Activated CD4-positive, alpha-beta T cell treated with anti-CD3 and anti-CD28 coated beads, Interleukin-2, amount 10 ng/mL, durations not matched to agents 7 days and 5 days (primary cell): ENCODE measurements at regions of chr6 and their contacts with region 1.

Region 1: DNA sequence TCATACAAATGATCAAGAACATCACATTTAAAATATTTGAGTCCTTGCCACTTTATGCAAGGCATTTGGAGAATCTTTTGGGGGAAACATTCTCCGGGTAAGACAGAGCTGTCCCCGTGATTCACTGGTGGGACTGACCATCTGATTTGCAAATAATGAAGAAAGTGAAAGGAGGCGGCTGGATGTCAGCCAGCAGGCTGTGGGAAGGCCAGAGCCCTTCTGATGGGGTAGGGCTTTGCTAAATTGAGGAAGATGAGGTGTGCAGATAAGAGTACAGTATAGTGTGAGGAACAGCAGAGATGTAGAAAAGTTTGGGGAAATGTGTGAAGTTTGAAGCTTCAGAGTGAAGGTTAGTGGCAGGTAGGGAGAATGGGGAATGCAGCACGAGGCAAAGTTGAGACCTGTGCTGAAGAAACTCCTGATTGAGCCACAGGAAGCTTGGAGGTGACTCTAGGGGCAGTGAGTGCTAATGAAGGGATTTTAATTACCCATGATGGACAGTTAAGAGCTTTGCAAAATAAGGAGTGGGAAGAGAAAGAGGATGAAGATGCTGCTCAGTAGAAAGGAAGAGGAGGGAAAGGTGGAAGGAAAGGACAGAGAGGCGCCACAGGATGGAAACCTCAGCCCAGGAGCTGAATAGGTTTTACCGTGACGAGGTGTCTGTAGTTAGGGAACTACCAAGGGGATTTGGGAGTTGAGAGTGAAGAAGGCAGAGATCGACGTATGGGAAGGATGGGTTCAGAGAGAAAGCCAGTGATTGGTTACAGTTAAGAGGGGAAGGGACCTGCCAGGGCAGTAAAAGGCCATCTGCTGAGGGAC is 68.7 kb downstream of the SNX9 start:
- DNase-seq: no peak
- H3K4me3 Mint-ChIP-seq: peak overlapping the region; percentile 18
- H3K27ac Mint-ChIP-seq: peak overlapping the region; percentile 52
- H3K4me1 Mint-ChIP-seq: peaks cover 30% of the 10 kb centered on the region
- H3K27me3 Mint-ChIP-seq: no peaks in the 10 kb centered on the region

Region 2: DNA sequence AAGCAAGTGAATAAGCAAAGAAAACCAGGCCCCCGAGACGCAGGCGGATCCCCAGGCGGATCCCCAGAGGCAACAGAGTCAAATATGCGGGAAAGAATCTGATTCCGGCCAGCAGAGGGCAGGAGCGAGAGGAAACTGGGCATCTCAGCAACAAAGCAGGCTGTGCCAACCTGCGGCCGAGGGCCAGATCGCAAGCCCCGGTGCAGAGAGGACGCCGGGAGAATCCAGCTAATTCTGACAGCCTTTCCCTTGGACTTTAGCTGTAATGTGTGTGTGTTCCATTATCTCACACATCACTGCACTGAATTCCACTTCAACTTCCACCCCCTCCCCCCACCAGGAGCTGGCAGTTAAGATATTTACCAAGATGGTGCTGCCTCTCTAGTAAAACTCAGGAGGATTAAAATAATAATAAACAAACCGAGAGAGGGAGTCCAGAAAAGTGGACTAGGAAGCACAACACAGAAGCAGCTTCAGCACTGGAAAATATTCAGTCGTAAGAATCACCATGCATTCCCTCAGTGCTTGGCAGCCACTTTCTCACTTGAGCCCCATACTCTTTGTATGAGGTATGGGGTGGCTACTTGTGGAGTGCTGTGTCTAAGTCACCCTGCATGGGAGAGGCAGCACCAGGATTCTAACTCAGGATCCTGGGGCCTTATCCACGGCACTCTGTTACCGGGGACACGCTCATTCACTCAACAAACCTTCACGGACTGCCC is 134.9 kb before region 1 on chr6:
- CTCF ChIA-PET with region 1: interaction called, 10 read pairs
- POLR2A ChIA-PET with region 1: interaction called, 5 read pairs
- DNase-seq: peak; percentile 82
- H3K4me3 Mint-ChIP-seq: no peak overlapping the region
- H3K27ac Mint-ChIP-seq: no peak overlapping the region
- H3K4me1 Mint-ChIP-seq: peaks cover 53% of the 10 kb centered on the region
- H3K27me3 Mint-ChIP-seq: peaks cover 39% of the 10 kb centered on the region

Region 3: GRCh38 chr6:157873735-157874344 is 17.9 kb before region 1 on chr6:
- CTCF ChIA-PET with region 1: interaction called, 10 read pairs
- POLR2A ChIA-PET with region 1: no interaction called
- DNase-seq: peak; percentile 87
- H3K4me3 Mint-ChIP-seq: no peak overlapping the region
- H3K27ac Mint-ChIP-seq: no peak overlapping the region
- H3K4me1 Mint-ChIP-seq: peaks cover 23% of the 10 kb centered on the region
- H3K27me3 Mint-ChIP-seq: no peaks in the 10 kb centered on the region

Region 4: DNA sequence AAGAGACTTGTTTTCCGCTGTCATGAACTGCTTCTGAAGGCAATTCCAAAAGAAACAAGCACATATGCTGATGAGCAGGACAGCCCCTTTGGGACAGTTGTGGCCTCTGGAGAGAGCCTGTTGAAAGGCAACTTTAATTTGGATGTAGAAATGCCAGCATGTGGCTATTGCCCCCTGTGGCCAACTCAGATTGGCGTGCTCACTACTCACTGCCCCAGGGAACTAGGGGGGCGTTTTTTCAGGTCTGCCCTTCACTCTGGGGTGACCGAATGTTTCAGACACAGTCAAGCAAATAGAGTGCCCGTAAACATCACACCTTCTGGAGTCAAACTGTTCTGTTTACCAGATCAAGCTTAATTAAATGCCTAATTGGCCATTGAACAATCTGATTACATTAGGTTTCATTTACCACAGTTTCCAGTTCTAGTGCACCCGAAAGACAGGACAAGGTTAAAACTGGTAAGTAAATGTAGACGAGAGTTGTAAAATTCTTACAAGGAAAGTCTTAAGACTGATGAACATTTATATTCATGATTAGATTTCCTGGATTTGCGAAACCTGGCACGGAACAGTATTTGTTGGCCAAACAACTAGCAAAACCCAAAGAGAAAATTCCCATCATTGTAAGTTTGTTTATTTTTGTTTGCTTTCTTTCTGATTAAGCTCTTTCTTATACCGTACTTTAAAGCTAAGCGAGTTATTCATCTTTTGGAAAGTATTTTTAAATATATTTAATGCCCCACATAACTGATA is 14.0 kb after region 1 on chr6:
- CTCF ChIA-PET with region 1: interaction called, 13 read pairs
- POLR2A ChIA-PET with region 1: no interaction called
- DNase-seq: no peak
- H3K4me3 Mint-ChIP-seq: no peak overlapping the region
- H3K27ac Mint-ChIP-seq: no peak overlapping the region
- H3K4me1 Mint-ChIP-seq: peaks cover 15% of the 10 kb centered on the region
- H3K27me3 Mint-ChIP-seq: no peaks in the 10 kb centered on the region